Breast epithelium (tissue), 4 donors: ENCODE measurements at regions of chr3 and their contacts with region 1.

Region 1: DNA sequence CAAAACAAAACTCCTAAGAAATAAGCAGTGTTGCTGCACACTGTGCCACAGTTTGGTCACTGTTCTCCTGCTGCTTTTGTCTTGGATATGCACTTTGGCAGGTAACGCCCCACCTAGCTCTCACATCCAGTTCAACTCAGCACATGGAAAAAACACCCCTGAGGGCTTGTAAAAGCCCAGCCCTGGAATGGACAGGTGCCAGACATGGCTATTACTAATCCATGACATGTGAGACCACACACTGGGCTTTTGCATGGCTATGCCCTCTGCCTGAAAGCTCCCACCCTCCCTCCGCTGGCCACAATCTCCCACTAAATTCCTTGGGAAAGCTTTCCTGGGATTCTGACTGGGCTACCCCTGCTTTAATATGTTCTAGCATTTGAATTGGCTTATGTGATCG is 24.7 kb upstream of the ZBED2 start:
- DNase-seq: no peak
- H3K4me3 ChIP-seq: no peak overlapping the region
- H3K27ac ChIP-seq: no peak overlapping the region
- H3K4me1 ChIP-seq: no peaks in the 10 kb centered on the region
- H3K27me3 ChIP-seq: no peaks in the 10 kb centered on the region
- CTCF ChIP-seq: no peak
- POLR2A ChIP-seq: no peak

Region 2: GRCh38 chr3:111650378-111651275 is 30.8 kb after region 1 on chr3:
- intact Hi-C with region 1: loop called (anchors 2 kb)
- DNase-seq: no peak
- H3K4me3 ChIP-seq: no peak overlapping the region
- H3K27ac ChIP-seq: no peak overlapping the region
- H3K4me1 ChIP-seq: no peaks in the 10 kb centered on the region
- H3K27me3 ChIP-seq: no peaks in the 10 kb centered on the region
- CTCF ChIP-seq: no peak
- POLR2A ChIP-seq: no peak

Region 3: DNA sequence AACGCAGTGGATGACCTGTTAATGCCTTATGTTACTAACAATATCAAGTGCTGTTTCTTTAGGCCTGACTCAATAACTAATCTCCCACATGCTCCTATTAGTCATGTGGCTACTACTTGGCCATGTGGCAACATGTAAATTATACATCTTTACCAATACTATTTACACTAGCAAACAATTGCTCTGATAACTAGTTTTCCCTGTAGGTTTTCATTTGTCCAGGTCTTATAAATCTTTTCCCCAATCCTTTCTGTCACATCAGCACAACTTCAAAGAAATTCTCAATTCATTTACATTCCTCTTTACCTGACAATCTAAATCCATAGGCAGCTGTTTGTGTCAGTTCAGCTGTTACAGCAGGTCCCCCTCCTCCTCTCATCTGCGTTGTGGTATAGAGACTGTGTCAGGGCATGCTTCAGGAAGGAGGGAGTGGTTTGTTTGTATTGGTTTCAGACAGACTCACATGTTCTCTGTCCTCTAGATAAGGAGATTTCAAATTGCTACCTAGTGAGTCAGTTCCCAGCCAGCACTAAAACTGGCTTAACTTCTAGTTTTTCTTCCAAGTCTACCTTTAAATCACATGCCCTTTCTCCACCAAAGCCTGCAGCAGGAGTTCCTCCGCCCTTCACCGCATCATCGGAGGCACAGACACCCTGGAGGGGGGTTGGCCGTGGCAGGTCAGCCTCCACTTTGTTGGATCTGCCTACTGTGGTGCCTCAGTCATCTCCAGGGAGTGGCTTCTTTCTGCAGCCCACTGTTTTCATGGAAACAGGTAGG is 455.1 kb after region 1 on chr3:
- intact Hi-C with region 1: no loop called
- DNase-seq: no peak
- H3K4me3 ChIP-seq: no peak overlapping the region
- H3K27ac ChIP-seq: peak overlapping the region in 1 of 2 donors; percentile 45
- H3K4me1 ChIP-seq: no peaks in the 10 kb centered on the region
- H3K27me3 ChIP-seq: no peaks in the 10 kb centered on the region
- CTCF ChIP-seq: no peak
- POLR2A ChIP-seq: no peak